Adrenal gland (tissue), 19 donors: ENCODE measurements at regions of chr7 and their contacts with region 1.

Region 1: GRCh38 chr7:518630-519483 is 789 bp downstream of the PDGFA start:
- DNase-seq: peak; percentile 75 to 88 (median 82)
- H3K4me3 ChIP-seq: peak overlapping the region in 3 of 4 donors; percentile 35 to 66 (median 49)
- H3K27ac ChIP-seq: peak overlapping the region in 4 of 5 donors; percentile 24 to 94 (median 75)
- H3K4me1 ChIP-seq: peaks cover 31 to 35% of the 10 kb centered on the region in 2 donors
- H3K27me3 ChIP-seq: peaks cover 26% of the 10 kb centered on the region
- CTCF ChIP-seq: peak in 1 of 6 experiments; percentile 23
- POLR2A ChIP-seq: peak; percentile 65 to 72

Region 2: GRCh38 chr7:464454-465401 is 54.1 kb before region 1 on chr7:
- intact Hi-C with region 1: loop called in 1 of 2 experiments (anchors 10 kb)
- DNase-seq: peak; percentile 20 to 74 (median 47)
- H3K4me3 ChIP-seq: no peak overlapping the region
- H3K27ac ChIP-seq: peak overlapping the region in 1 of 5 donors; percentile 51
- H3K4me1 ChIP-seq: no peaks in the 10 kb centered on the region
- H3K27me3 ChIP-seq: no peaks in the 10 kb centered on the region
- CTCF ChIP-seq: no peak
- POLR2A ChIP-seq: no peak

Region 3: GRCh38 chr7:726084-726853 is 207.4 kb after region 1 on chr7 and contains the start of gene DNAAF5:
- intact Hi-C with region 1: loop called (anchors 5 to 10 kb)
- DNase-seq: peak; percentile 80 to 91 (median 85)
- H3K4me3 ChIP-seq: peak within 1 kb of the TSS; percentile 37 to 91 (median 62)
- H3K27ac ChIP-seq: peak within 1 kb of the TSS in 2 of 5 donors; percentile 38 to 73
- H3K4me1 ChIP-seq: peaks cover 13 to 18% of the 10 kb centered on the region in 2 donors
- H3K27me3 ChIP-seq: no peaks in the 10 kb centered on the region
- CTCF ChIP-seq: no peak
- POLR2A ChIP-seq: peak in 1 of 2 donors; percentile 24
- total RNA-seq, gene DNAAF5: 8.3 to 32.7 (median 21.0) TPM